OCI-LY7 (cell line): ENCODE measurements at regions of chr13 and their contacts with region 1.

Region 1: DNA sequence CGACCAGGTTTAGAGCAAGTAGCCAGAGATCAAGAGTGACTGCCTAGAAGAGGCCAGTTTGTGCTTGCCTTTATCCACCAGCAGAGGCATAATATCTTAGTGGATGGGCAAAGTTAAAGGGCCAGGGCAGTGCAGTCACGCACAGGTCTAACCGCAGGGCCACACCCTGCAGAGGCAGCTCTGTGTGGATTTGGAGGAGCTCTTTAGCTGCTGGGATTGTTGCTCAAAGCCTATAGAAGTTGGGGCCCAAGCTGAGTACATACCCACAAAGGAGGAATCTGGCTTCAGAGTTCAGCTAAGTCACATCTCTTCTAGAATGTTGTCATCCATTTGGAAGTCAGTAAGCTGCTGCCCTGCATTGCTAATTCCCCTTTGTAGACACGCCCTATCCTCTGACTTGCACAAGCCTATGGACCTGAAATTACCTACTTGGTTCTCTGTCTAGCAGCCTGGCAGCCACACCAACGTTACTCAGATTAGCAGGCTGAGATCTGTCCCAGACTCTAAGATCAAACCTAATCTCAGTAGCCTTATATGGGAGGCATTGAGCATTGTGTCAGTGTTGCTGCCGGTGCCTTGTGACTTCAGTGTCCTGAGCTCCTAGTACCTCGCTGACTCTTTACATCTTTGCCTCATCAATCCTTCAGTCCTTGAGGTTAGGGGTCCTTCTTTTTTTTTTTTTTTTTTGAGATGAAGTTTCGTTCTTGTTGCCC is 102.9 kb upstream of the STARD13 start:
- DNase-seq: no peak
- H3K4me3 ChIP-seq: no peak overlapping the region
- H3K27ac ChIP-seq: no peak overlapping the region
- H3K4me1 ChIP-seq: no peaks in the 10 kb centered on the region
- CTCF ChIP-seq: no peak

Region 2: GRCh38 chr13:33249066-33249465 is 139.4 kb before region 1 on chr13:
- CTCF ChIA-PET with region 1: no interaction called
- POLR2A ChIA-PET with region 1: no interaction called
- intact Hi-C with region 1: no loop called
- DNase-seq: no peak
- H3K4me3 ChIP-seq: no peak overlapping the region
- H3K27ac ChIP-seq: no peak overlapping the region
- H3K4me1 ChIP-seq: no peaks in the 10 kb centered on the region
- CTCF ChIP-seq: no peak

Region 3: GRCh38 chr13:33367926-33368325 is 20.5 kb before region 1 on chr13:
- CTCF ChIA-PET with region 1: no interaction called
- POLR2A ChIA-PET with region 1: interaction called, 10 read pairs
- intact Hi-C with region 1: no loop called
- DNase-seq: no peak
- H3K4me3 ChIP-seq: no peak overlapping the region
- H3K27ac ChIP-seq: no peak overlapping the region
- H3K4me1 ChIP-seq: no peaks in the 10 kb centered on the region
- CTCF ChIP-seq: no peak

Region 4: DNA sequence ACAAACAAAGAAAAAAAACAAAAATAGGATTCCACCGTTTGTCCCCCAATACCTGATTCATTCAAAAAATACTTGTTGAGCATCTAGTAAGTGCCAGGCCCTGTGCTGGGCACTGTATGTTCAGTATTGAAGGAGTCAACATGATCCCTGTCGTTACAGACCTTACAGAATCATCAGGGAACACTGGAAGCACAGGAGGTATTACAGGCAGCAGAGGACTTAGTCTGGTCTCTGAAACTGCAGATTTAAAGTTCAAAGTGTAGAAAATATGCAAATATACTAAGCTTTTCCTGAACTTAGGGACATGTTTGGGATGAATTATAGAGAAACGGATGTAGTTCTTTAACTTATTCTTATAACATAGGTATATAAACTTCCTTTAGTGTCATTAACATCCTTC is 268.8 kb after region 1 on chr13:
- CTCF ChIA-PET with region 1: no interaction called
- POLR2A ChIA-PET with region 1: no interaction called
- intact Hi-C with region 1: no loop called
- DNase-seq: no peak
- H3K4me3 ChIP-seq: no peak overlapping the region
- H3K27ac ChIP-seq: no peak overlapping the region
- H3K4me1 ChIP-seq: no peaks in the 10 kb centered on the region
- CTCF ChIP-seq: no peak